PC-9 (cell line): ENCODE measurements at regions of chr1 and their contacts with region 1.

Region 1: GRCh38 chr1:222455188-222455879 is 92.6 kb downstream of the HHIPL2 start:
- DNase-seq: peak; percentile 55 to 90
- H3K4me3 ChIP-seq: peak overlapping the region; percentile 42; the same call in 1 of the 2 replicates
- H3K27ac ChIP-seq: peak overlapping the region; percentile 30; the same call in 1 of the 2 replicates
- H3K4me1 ChIP-seq: 0 out of 2 replicates have a peak, but pooled peaks cover 10% of the 10 kb centered on the region
- H3K27me3 ChIP-seq: no peaks in the 10 kb centered on the region
- CTCF ChIP-seq: peak; percentile 97

Region 2: DNA sequence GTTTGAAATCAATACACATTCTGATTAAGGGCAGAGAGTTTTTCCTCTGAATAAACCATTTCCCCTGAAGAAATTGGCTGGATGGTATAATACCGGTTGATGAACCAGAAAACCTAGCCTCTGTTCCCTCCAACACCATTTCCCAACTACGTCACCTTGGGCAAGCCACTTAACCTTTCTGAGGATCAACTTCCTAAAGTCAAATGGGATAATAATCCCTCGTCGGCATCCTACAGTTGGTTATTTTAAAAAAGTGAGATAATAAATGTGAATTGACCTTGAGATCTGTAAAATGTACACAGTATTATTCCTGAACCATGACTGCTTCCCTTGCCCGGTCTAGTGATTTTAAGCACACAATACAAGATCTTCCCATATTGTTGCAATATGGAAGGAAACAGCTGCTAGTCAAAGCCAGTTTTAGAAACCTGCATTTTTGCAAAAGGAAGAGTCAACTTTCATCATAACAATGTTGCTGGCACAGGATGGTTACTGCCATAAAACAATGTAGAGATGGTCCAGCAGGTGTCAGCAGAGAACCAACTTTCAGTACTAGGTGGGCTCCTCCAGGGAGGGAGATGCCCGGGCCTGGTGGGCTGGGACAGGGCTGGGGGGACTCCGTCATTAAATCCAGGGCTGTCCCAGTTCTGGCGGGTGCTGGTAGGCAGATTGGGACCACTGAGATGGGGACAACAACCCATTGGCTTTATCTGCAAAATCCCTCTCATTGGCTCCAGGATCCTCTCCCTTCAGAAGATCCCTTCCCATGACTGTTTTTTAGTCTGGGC is 1581.3 kb before region 1 on chr1:
- CTCF ChIA-PET with region 1: no interaction called
- POLR2A ChIA-PET with region 1: no interaction called
- intact Hi-C with region 1: loop called (anchors 2 kb)
- DNase-seq: peak in 1 of 2 experiments; percentile 35
- H3K4me3 ChIP-seq: no peak overlapping the region
- H3K27ac ChIP-seq: no peak overlapping the region
- H3K4me1 ChIP-seq: no peaks in the 10 kb centered on the region
- H3K27me3 ChIP-seq: no peaks in the 10 kb centered on the region
- CTCF ChIP-seq: peak; percentile 82

Region 3: DNA sequence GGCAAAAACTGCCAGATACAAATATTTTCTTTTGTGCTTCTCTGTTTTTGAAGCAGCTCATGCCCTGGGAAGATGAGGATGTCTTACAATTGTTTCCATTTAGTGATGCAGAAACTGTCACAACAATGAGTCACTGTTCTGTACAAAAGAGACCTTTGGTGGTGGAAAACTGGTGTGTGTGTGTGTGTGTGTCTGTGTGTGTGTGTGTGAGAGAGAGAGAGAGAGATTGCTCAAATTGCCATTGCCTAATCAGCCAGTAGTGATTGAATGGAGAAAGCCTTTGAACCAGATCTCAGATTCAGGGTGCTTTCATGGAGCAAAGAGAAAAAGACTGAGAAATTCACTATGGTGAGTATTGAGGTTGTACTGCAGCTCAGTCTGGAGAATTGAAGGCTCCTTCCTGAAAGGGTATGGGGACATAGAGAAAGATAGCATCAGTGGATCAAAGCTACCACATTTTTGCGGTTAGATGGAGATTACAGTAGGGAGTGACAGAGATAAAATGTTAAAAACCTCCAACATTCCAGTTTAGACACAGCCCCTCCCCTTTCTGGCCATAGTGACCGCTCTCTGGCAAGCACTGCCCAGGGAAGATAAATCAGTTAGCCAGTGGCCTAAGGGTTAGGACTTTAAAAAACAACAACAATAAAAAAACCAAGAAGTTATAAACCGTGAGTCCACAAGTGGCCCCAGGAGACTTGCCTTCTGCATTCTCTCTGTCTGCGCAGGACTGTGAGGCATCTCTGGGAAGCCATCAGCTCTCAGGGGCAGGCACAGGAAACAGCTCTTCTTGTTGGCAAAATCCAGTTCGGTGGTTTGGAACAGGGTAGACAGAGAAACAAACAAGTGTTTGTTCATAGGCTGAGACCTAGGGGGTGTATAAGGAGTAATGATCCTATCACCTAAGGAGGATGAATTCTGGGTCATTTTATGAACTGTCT is 1119.9 kb before region 1 on chr1:
- CTCF ChIA-PET with region 1: no interaction called
- POLR2A ChIA-PET with region 1: no interaction called
- intact Hi-C with region 1: loop called (anchors 10 kb)
- DNase-seq: peak; percentile 82 to 90
- H3K4me3 ChIP-seq: no peak overlapping the region
- H3K27ac ChIP-seq: peak overlapping the region; percentile 67
- H3K4me1 ChIP-seq: peaks cover 29% of the 10 kb centered on the region
- H3K27me3 ChIP-seq: no peaks in the 10 kb centered on the region
- CTCF ChIP-seq: no peak

Region 4: GRCh38 chr1:221543529-221544120 is 911.7 kb before region 1 on chr1:
- CTCF ChIA-PET with region 1: no interaction called
- POLR2A ChIA-PET with region 1: no interaction called
- intact Hi-C with region 1: loop called (anchors 5 kb)
- DNase-seq: peak in 1 of 2 experiments; percentile 3
- H3K4me3 ChIP-seq: no peak overlapping the region
- H3K27ac ChIP-seq: no peak overlapping the region
- H3K4me1 ChIP-seq: no peaks in the 10 kb centered on the region
- H3K27me3 ChIP-seq: no peaks in the 10 kb centered on the region
- CTCF ChIP-seq: peak; percentile 67

Region 5: DNA sequence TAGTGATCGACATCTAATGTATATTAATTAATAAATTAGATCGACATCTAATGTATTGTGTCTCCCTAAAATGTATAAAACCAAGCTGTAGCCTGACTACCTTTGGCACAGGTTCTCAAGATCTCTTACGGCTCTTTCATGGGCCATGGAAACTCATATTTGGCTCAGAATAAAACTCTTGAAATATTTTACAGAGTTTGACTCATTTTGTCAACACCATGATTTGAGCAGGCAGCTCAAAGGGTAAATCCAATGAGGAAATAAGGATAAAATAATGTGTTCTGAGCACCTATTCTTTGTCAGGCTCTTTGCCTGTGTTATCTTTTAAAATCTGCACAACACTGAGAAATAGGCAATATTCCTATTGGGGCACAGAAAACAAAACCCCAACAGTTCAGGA is 490.1 kb before region 1 on chr1:
- CTCF ChIA-PET with region 1: interaction called, 3 read pairs
- POLR2A ChIA-PET with region 1: no interaction called
- intact Hi-C with region 1: loop called (anchors 5 kb)
- DNase-seq: peak in 1 of 2 experiments; percentile 94
- H3K4me3 ChIP-seq: peak overlapping the region; percentile 84; the same call in 1 of the 2 replicates
- H3K27ac ChIP-seq: peak overlapping the region; percentile 96
- H3K4me1 ChIP-seq: peaks cover 62% of the 10 kb centered on the region
- H3K27me3 ChIP-seq: no peaks in the 10 kb centered on the region
- CTCF ChIP-seq: no peak

Region 6: DNA sequence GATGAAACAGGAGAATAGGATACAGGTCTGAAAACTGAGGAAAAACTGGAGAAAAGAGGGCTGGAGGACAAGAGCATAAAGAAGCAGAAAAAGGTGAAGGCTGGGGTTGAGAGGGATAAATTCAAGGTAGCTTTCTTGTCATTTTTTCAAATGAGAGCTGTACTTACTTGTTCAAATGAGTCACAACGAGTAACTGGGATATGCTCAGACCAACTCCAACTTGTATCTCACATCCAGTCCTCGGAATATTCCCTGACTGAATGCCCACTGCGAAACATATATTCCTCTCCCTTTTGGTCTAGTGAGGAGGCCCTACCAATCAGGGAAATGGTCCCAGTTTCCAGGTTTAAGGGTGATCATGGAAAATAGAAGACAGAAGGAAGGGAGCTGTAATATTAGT is 250.9 kb before region 1 on chr1:
- CTCF ChIA-PET with region 1: no interaction called
- POLR2A ChIA-PET with region 1: no interaction called
- intact Hi-C with region 1: loop called (anchors 10 kb)
- DNase-seq: no peak
- H3K4me3 ChIP-seq: no peak overlapping the region
- H3K27ac ChIP-seq: no peak overlapping the region
- H3K4me1 ChIP-seq: no peaks in the 10 kb centered on the region
- H3K27me3 ChIP-seq: no peaks in the 10 kb centered on the region
- CTCF ChIP-seq: no peak